ENCODE measurements at regions of chr17 and their contacts with region 1.

Region 1: GRCh38 chr17:48351831-48352332 is 78.1 kb downstream of the SKAP1 start:
- DNase-seq: peak; percentile 26
- H3K4me3 Mint-ChIP-seq: no peak overlapping the region
- H3K27ac Mint-ChIP-seq: no peak overlapping the region
- H3K4me1 Mint-ChIP-seq: no peaks in the 10 kb centered on the region
- H3K27me3 Mint-ChIP-seq: peaks cover 37% of the 10 kb centered on the region
- CTCF ChIP-seq: peak; percentile 68

Region 2: GRCh38 chr17:48363161-48363560 is 11.3 kb after region 1 on chr17:
- CTCF ChIA-PET with region 1: interaction called, 34 read pairs
- POLR2A ChIA-PET with region 1: no interaction called
- intact Hi-C with region 1: no loop called
- DNase-seq: no peak
- H3K4me3 Mint-ChIP-seq: no peak overlapping the region
- H3K27ac Mint-ChIP-seq: no peak overlapping the region
- H3K4me1 Mint-ChIP-seq: no peaks in the 10 kb centered on the region
- H3K27me3 Mint-ChIP-seq: peaks cover 88% of the 10 kb centered on the region
- CTCF ChIP-seq: no peak

Region 3: GRCh38 chr17:48457080-48457836 is 105.4 kb after region 1 on chr17:
- CTCF ChIA-PET with region 1: interaction called, 4 read pairs
- POLR2A ChIA-PET with region 1: interaction called, 3 read pairs
- intact Hi-C with region 1: loop called (anchors 2 kb)
- DNase-seq: peak; percentile 64
- H3K4me3 Mint-ChIP-seq: peak overlapping the region; percentile 21
- H3K27ac Mint-ChIP-seq: no peak overlapping the region
- H3K4me1 Mint-ChIP-seq: peaks cover 4% of the 10 kb centered on the region
- H3K27me3 Mint-ChIP-seq: no peaks in the 10 kb centered on the region
- CTCF ChIP-seq: peak; percentile 97